Activated CD4-positive, alpha-beta memory T cell treated with anti-CD3 and anti-CD28 coated beads, Interleukin-2, amount 10 ng/mL, durations not matched to agents 7 days and 5 days (primary cell): ENCODE measurements at regions of chr3 and their contacts with region 1.

Region 1: GRCh38 chr3:185764163-185764979 is 60.5 kb downstream of the IGF2BP2 start:
- DNase-seq: no peak
- H3K4me3 Mint-ChIP-seq: no peak overlapping the region
- H3K27ac Mint-ChIP-seq: no peak overlapping the region
- H3K4me1 Mint-ChIP-seq: no peaks in the 10 kb centered on the region
- H3K27me3 Mint-ChIP-seq: peaks cover 52% of the 10 kb centered on the region

Region 2: GRCh38 chr3:185677146-185677829 is 87.1 kb before region 1 on chr3:
- CTCF ChIA-PET with region 1: interaction called, 30 read pairs
- POLR2A ChIA-PET with region 1: interaction called, 4 read pairs
- DNase-seq: no peak
- H3K4me3 Mint-ChIP-seq: no peak overlapping the region
- H3K27ac Mint-ChIP-seq: no peak overlapping the region
- H3K4me1 Mint-ChIP-seq: no peaks in the 10 kb centered on the region
- H3K27me3 Mint-ChIP-seq: peaks cover 48% of the 10 kb centered on the region

Region 3: GRCh38 chr3:185789891-185790830 is 25.8 kb after region 1 on chr3:
- CTCF ChIA-PET with region 1: interaction called, 12 read pairs
- POLR2A ChIA-PET with region 1: no interaction called
- DNase-seq: no peak
- H3K4me3 Mint-ChIP-seq: no peak overlapping the region
- H3K27ac Mint-ChIP-seq: no peak overlapping the region
- H3K4me1 Mint-ChIP-seq: peaks cover 2% of the 10 kb centered on the region
- H3K27me3 Mint-ChIP-seq: peaks cover 10% of the 10 kb centered on the region

Region 4: DNA sequence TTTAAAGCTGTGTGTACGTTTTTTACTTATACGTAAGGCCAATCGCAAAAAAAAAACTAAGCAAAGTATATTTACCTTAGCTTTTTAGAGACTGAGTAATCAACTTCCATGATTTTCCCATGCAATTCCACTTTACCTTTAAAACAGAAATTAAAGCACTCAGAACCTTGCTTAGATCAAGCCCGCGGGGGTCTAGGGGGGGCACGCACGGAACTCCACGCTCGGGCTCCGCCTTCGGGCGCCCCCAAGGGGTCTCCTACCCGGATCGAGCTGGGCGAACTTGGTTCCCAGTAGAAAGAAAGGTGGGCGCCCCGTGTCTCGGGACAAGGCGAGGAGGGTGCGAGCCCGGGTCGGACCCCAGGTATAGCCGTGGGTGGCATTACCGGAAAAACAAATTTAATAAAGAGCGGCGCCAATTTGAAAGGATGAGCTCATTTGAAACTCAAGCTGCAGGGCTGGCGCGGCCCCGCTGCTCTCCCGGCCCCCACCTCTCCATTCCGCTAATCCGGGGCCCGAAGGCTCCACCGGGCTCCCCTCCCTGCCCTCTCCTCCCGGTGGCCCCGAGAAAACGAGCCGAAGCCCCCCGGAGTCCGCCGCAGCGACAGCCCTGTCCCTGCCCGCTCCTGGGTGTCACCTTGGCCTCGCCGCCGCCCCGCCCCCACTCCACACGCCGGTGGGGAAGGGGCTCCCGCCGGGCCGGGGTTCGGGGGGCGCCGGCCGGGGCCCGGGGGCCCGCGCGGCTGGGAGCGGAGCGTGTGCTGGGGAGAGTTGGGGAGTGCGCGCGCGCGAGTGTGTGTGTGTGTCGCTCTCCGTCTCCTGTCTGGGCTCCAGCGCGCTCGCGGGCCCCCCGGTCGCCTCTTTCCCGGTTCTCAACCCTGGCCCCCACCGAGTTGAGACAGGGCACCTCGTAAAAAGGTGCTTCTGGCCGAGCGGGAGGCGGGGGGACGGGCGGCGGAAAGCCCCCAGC is 59.0 kb after region 1 on chr3:
- CTCF ChIA-PET with region 1: interaction called, 11 read pairs
- POLR2A ChIA-PET with region 1: no interaction called
- DNase-seq: peak; percentile 21
- H3K4me3 Mint-ChIP-seq: peak overlapping the region; percentile 61
- H3K27ac Mint-ChIP-seq: no peak overlapping the region
- H3K4me1 Mint-ChIP-seq: peaks cover 15% of the 10 kb centered on the region
- H3K27me3 Mint-ChIP-seq: peaks cover 73% of the 10 kb centered on the region